ENCODE measurements at regions of chr12 and their contacts with region 1.

Region 1: GRCh38 chr12:120367233-120367923 is 1.6 kb downstream of the MSI1 start:
- DNase-seq: peak; percentile 51
- H3K4me3 ChIP-seq: peak overlapping the region; percentile 57
- H3K27ac ChIP-seq: no peak overlapping the region
- H3K4me1 ChIP-seq: peaks cover 11% of the 10 kb centered on the region
- H3K27me3 ChIP-seq: peaks cover 45% of the 10 kb centered on the region
- CTCF ChIP-seq: peak; percentile 76

Region 2: GRCh38 chr12:120346681-120347080 is 20.7 kb before region 1 on chr12:
- CTCF ChIA-PET with region 1: interaction called, 10 read pairs
- POLR2A ChIA-PET with region 1: no interaction called
- intact Hi-C with region 1: no loop called
- DNase-seq: peak; percentile 39
- H3K4me3 ChIP-seq: no peak overlapping the region
- H3K27ac ChIP-seq: no peak overlapping the region
- H3K4me1 ChIP-seq: no peaks in the 10 kb centered on the region
- H3K27me3 ChIP-seq: no peaks in the 10 kb centered on the region
- CTCF ChIP-seq: 0 out of 2 replicates have a peak, but pooled peaks have one; percentile 12

Region 3: DNA sequence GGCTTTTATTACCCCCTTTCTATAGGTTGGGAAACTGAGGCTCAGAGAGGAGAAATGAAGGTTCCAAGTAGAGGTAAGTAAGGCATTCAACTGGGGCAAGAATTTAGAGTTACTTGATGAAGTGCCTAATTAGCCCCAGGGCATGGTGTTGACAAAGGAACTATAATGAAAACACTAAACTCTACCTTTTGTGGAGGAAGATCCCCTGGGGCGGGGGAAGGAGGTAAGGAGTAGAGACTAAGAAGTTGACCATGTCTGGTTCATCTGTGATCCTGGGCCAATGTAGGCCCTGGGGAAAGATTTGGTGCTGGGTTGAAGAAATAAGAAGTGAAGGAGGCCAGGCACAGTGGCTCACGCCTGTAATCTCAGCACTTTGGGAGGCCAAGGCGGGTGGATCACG is 54.3 kb after region 1 on chr12:
- CTCF ChIA-PET with region 1: interaction called, 11 read pairs
- POLR2A ChIA-PET with region 1: no interaction called
- intact Hi-C with region 1: no loop called
- DNase-seq: peak; percentile 46
- H3K4me3 ChIP-seq: no peak overlapping the region
- H3K27ac ChIP-seq: no peak overlapping the region
- H3K4me1 ChIP-seq: no peaks in the 10 kb centered on the region
- H3K27me3 ChIP-seq: no peaks in the 10 kb centered on the region
- CTCF ChIP-seq: no peak

Region 4: GRCh38 chr12:120748242-120748641 is 380.9 kb after region 1 on chr12:
- CTCF ChIA-PET with region 1: no interaction called
- POLR2A ChIA-PET with region 1: no interaction called
- intact Hi-C with region 1: no loop called
- DNase-seq: no peak
- H3K4me3 ChIP-seq: no peak overlapping the region
- H3K27ac ChIP-seq: no peak overlapping the region
- H3K4me1 ChIP-seq: no peaks in the 10 kb centered on the region
- H3K27me3 ChIP-seq: no peaks in the 10 kb centered on the region
- CTCF ChIP-seq: no peak

Region 5: DNA sequence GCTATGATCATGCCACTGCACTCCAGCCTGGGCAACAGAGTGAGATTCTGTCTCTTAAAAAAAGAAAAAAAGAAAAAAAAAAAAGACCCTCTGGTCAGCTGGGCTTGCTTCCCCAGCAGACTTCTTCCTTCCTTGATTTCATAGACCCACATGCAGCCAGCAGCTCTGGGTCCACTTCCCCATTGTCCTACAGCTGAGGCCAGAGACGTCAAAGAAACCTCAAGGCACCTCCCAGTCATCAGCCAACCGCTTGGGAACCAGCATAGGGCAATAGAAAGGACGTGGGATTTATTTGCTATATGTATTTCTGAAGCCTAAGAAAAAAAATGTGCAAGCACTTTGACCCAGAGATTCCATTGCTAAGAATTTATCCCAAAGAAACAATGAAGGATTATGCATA is 572.1 kb after region 1 on chr12:
- CTCF ChIA-PET with region 1: no interaction called
- POLR2A ChIA-PET with region 1: interaction called, 16 read pairs
- intact Hi-C with region 1: no loop called
- DNase-seq: no peak
- H3K4me3 ChIP-seq: no peak overlapping the region
- H3K27ac ChIP-seq: no peak overlapping the region
- H3K4me1 ChIP-seq: no peaks in the 10 kb centered on the region
- H3K27me3 ChIP-seq: no peaks in the 10 kb centered on the region
- CTCF ChIP-seq: no peak

Region 6: DNA sequence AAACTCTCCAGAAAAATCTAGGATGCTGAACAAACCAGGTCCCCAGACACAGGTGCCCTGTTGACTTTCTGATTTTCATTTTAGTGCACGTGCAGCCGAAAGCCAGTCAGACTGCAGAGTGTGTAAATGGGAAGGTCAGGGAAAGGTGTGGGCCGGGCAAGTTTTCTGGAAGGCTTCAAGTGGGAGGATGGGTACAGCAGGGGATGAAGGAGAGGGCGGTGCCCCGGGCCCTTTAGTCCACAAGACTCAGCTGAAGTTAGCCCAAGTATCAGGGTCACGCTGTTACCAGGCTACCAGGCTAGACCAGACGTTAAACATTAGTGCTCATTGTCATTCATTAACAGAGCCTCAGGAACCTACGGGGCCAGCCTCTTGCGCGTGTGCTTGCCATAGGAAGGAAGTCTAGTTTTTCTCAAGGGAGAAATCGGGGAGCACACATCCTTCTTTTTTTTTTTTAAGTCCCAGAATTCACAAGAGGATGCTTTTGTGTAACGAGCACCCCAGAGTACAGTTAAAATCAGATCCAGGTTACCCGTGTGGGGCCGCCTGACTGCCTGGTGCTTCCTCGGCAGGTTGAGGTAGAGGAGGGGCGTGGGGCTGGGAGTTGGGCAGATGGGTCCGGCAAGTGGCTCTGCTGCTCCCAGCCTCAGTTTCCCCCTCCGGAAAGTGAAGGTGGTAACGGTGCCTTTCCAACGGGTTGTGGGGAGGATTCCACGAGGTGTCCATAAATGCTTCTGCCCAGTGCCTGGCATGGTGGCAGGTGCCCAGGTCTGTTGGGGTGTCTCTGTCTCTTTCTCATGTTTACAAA is 1673.4 kb after region 1 on chr12:
- CTCF ChIA-PET with region 1: no interaction called
- POLR2A ChIA-PET with region 1: interaction called, 11 read pairs
- intact Hi-C with region 1: no loop called
- DNase-seq: no peak
- H3K4me3 ChIP-seq: no peak overlapping the region
- H3K27ac ChIP-seq: no peak overlapping the region
- H3K4me1 ChIP-seq: no peaks in the 10 kb centered on the region
- H3K27me3 ChIP-seq: no peaks in the 10 kb centered on the region
- CTCF ChIP-seq: no peak

Measured in A673 (cell line).